Esophagus muscularis mucosa (tissue), 4 donors: ENCODE measurements at regions of chr5 and their contacts with region 1.

Region 1: GRCh38 chr5:112995764-112996618 is 19.4 kb downstream of the DCP2 start:
- DNase-seq: peak; percentile 94
- H3K4me3 ChIP-seq: no peak overlapping the region
- H3K27ac ChIP-seq: no peak overlapping the region
- H3K4me1 ChIP-seq: peaks cover 4 to 10% (median 7%) of the 10 kb centered on the region in 4 donors
- H3K27me3 ChIP-seq: no peaks in the 10 kb centered on the region
- CTCF ChIP-seq: peak; percentile 89 to 95 (median 90)
- EP300 ChIP-seq: no peak
- POLR2A ChIP-seq: no peak

Region 2: DNA sequence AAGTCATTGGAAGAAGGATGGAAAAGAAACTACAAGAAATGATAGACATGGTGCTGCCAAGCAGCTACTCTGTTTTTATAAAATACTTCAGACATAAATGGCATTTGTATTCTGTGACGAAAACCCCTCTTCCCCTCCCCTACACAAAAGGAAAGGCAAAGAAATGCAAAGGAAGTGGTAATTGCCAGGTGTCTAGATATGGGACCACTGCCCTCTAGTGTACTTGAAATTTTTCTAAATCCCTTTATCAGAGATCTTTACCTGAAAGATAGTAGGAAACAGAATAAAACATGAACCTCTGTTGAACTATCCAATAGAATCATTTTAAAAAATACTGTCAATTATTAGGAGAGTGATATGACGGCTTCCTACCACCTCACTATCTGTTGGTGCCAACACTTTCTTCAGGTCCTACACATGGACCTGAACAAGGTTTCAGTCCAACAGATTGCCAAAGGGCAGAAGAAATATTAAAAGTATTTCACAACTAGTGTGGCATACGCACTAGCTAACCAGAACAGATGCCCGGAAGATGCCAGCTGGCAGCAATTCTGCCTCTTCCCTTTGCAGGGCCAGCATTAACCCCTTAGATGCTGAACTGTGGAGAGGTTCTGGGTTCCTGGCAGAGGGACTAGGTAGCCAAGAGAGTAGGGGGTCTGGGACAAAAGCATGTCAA is 334.7 kb after region 1 on chr5:
- intact Hi-C with region 1: loop called (anchors 2 kb)
- DNase-seq: no peak
- H3K4me3 ChIP-seq: no peak overlapping the region
- H3K27ac ChIP-seq: no peak overlapping the region
- H3K4me1 ChIP-seq: peaks cover 7 to 11% (median 10%) of the 10 kb centered on the region in 4 donors
- H3K27me3 ChIP-seq: no peaks in the 10 kb centered on the region
- CTCF ChIP-seq: peak; percentile 29 to 50 (median 31)
- EP300 ChIP-seq: no peak
- POLR2A ChIP-seq: no peak

Region 3: GRCh38 chr5:113378959-113379541 is 383.1 kb after region 1 on chr5:
- intact Hi-C with region 1: loop called (anchors 5 kb)
- DNase-seq: no peak
- H3K4me3 ChIP-seq: no peak overlapping the region
- H3K27ac ChIP-seq: no peak overlapping the region
- H3K4me1 ChIP-seq: peaks cover 0 to 5% (median 0%) of the 10 kb centered on the region in 4 donors
- H3K27me3 ChIP-seq: no peaks in the 10 kb centered on the region
- CTCF ChIP-seq: peak; percentile 64 to 77 (median 66)
- EP300 ChIP-seq: no peak
- POLR2A ChIP-seq: no peak

Region 4: GRCh38 chr5:113513384-113514288 is 517.6 kb after region 1 on chr5 and contains the start of gene YTHDC2:
- intact Hi-C with region 1: loop called (anchors 5 kb)
- DNase-seq: peak; percentile 96
- H3K4me3 ChIP-seq: peak within 1 kb of the TSS; percentile 74 to 88 (median 77)
- H3K27ac ChIP-seq: peak within 1 kb of the TSS; percentile 92 to 95 (median 94)
- H3K4me1 ChIP-seq: peaks cover 10 to 31% (median 31%) of the 10 kb centered on the region in 4 donors
- H3K27me3 ChIP-seq: peaks cover 0 to under 1% (median 0%) of the 10 kb centered on the region in 4 donors
- CTCF ChIP-seq: peak in 1 of 3 experiments; percentile 19
- EP300 ChIP-seq: no peak
- POLR2A ChIP-seq: peak; percentile 24
- total RNA-seq, gene YTHDC2: 9.3 to 32.0 (median 15.8) TPM

Region 5: GRCh38 chr5:113606298-113607134 is 610.5 kb after region 1 on chr5:
- intact Hi-C with region 1: loop called (anchors 10 kb)
- DNase-seq: no peak
- H3K4me3 ChIP-seq: peak overlapping the region in 1 of 4 donors; percentile 2
- H3K27ac ChIP-seq: no peak overlapping the region
- H3K4me1 ChIP-seq: peaks cover 0 to 9% (median 4%) of the 10 kb centered on the region in 4 donors
- H3K27me3 ChIP-seq: peaks cover 0 to 34% (median 0%) of the 10 kb centered on the region in 4 donors
- CTCF ChIP-seq: peak; percentile 48 to 68 (median 61)
- EP300 ChIP-seq: no peak
- POLR2A ChIP-seq: no peak